K562 (cell line): ENCODE measurements at regions of chr5 and their contacts with region 1.

Region 1: DNA sequence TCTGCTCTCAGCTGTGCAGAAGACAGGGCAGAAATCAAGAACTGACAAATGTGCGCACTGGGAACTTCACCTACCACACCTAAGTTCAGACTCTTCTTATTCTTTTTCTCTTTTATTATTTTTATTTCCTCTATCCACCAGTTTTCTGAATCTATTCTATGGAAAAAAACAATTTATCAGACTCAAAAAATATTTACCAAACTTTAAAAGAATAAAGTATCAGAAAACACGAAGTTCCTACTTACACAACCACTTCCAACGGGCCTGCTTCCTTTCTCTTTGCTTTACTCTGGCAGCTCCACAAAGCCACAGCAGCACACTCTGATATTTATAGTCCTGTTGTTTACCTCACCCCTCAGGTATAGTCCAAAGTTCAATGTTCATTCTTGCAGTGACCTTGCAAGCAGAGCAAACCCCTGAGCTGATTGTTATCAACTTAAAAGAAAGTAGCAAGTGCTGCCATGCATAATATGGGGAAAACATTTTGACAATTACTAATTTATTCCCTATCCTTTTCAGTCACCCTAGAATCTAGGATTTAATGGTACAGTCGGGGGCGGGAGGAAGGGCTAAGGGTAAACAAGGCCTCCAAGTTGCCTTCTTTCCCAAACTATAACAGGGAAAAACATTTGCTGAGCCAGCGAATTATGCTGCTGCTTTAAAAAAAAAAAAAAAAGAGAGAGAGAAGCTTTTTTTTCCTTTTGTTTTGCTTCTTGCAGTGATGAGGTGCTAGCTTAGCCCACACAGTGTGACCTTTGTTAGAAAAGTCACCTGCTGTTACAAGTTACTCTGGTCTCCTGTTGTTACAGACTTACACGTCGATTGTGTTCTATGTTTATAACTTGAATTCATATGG is at the start of gene SELENOP:
- DNase-seq: peak in 2 of 4 experiments; percentile 17 to 53
- ATAC-seq: peak; percentile 88
- H3K4me3 ChIP-seq: no peak within 1 kb of the TSS
- H3K27ac ChIP-seq: peak within 1 kb of the TSS; percentile 57
- H3K4me1 ChIP-seq: no peaks in the 10 kb centered on the region; a peak in 2 of 5 replicates
- H3K27me3 ChIP-seq: no peaks in the 10 kb centered on the region
- CTCF ChIP-seq: no peak
- EP300 ChIP-seq: no peak
- POLR2A ChIP-seq: peak; percentile 66
- RAD21 ChIP-seq: no peak
- polyA plus RNA-seq, gene SELENOP: 4.4 to 5.8 TPM

Region 2: DNA sequence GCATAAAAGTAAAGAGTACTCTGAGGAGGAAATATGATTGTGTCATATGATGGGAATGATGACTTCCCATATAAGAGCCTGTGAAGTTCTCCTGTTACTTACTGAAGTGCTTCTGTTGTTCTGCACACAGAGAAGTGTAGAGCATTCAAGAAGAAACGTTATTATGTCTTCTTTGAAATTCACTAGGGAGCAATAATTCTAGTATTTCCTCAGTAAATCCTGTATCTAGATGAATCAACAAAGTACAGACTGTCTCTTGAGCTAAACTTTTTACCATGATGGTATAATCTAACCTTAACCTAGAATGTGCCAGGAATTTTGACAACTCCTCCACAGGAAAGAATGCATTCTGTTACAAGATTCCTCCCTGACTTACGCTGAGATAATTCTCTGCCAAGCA is 407.5 kb before region 1 on chr5:
- CTCF ChIA-PET with region 1: no interaction called
- POLR2A ChIA-PET with region 1: no interaction called
- in situ Hi-C with region 1: no loop called
- intact Hi-C with region 1: no loop called
- DNase-seq: no peak
- ATAC-seq: no peak
- H3K4me3 ChIP-seq: no peak overlapping the region
- H3K27ac ChIP-seq: no peak overlapping the region
- H3K4me1 ChIP-seq: no peaks in the 10 kb centered on the region
- H3K27me3 ChIP-seq: no peaks in the 10 kb centered on the region
- CTCF ChIP-seq: no peak
- EP300 ChIP-seq: no peak
- POLR2A ChIP-seq: no peak
- RAD21 ChIP-seq: no peak

Region 3: DNA sequence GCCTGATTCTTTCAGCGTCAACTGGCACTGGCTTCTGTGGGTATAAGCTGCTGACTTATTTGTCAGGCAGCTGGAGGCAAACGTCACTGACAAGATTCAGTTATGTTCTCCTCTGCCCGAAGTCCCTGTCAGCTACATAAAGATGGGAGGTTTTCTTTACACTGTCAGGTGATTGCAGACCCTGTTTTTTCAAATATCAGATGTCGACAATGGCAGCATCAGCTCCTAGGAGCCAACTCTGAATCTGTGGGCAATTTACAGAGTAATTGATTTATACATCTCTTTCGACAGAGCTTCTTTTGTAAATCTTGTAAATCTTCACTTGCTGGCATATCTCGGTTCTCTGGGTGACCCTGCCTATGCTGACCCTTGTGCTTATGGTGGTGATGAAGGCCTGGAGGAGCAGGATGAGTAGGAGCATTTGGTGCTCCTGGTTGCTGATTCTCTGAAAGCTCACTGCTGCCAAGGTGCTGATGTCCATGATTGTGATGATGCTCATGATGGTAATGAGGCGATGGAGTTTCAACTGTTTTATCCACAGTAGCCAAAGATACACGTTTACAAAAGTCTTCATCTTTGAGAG is 11.0 kb before region 1 on chr5:
- CTCF ChIA-PET with region 1: no interaction called
- POLR2A ChIA-PET with region 1: interaction called, 17 read pairs
- in situ Hi-C with region 1: no loop called
- intact Hi-C with region 1: no loop called
- DNase-seq: no peak
- ATAC-seq: no peak
- H3K4me3 ChIP-seq: no peak overlapping the region
- H3K27ac ChIP-seq: no peak overlapping the region
- H3K4me1 ChIP-seq: no peaks in the 10 kb centered on the region
- H3K27me3 ChIP-seq: no peaks in the 10 kb centered on the region
- CTCF ChIP-seq: no peak
- EP300 ChIP-seq: no peak
- POLR2A ChIP-seq: no peak
- RAD21 ChIP-seq: no peak

Region 4: GRCh38 chr5:42825422-42826148 is 13.8 kb after region 1 on chr5:
- CTCF ChIA-PET with region 1: no interaction called
- POLR2A ChIA-PET with region 1: interaction called, 24 read pairs
- in situ Hi-C with region 1: no loop called
- intact Hi-C with region 1: no loop called
- DNase-seq: no peak
- ATAC-seq: peak; percentile 31; the same call in 2 of the 3 replicates
- H3K4me3 ChIP-seq: no peak overlapping the region
- H3K27ac ChIP-seq: no peak overlapping the region
- H3K4me1 ChIP-seq: no peaks in the 10 kb centered on the region; a peak in 1 of 5 replicates
- H3K27me3 ChIP-seq: no peaks in the 10 kb centered on the region
- CTCF ChIP-seq: no peak
- EP300 ChIP-seq: no peak
- POLR2A ChIP-seq: no peak
- RAD21 ChIP-seq: no peak